Posterior cingulate gyrus (tissue), 11 donors: ENCODE measurements at regions of chr4 and their contacts with region 1.

Region 1: DNA sequence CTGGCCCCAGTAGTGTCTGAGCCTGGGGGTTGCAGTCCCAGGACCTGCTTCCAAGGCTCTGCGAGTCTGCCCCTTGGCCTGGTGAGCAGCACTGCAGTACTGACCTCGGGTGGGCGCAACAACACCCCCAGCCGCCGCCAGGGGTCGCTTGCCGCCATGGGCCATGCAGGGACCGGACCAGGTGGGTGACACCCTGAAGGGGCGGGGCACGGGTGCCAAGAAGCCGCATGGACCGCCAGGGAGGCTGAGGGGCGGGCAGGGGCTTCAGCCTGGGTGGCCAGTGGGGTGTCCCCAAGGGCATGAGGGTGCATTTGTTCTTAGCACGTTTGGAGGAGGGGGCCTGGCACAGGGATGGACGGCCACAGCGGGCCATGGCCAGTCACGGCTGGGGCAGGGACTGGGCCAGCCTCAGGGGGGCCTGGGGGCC is 25.0 kb downstream of the TACC3 start:
- DNase-seq: peak in 9 of 10 donors; percentile 43 to 95 (median 71)

Region 2: DNA sequence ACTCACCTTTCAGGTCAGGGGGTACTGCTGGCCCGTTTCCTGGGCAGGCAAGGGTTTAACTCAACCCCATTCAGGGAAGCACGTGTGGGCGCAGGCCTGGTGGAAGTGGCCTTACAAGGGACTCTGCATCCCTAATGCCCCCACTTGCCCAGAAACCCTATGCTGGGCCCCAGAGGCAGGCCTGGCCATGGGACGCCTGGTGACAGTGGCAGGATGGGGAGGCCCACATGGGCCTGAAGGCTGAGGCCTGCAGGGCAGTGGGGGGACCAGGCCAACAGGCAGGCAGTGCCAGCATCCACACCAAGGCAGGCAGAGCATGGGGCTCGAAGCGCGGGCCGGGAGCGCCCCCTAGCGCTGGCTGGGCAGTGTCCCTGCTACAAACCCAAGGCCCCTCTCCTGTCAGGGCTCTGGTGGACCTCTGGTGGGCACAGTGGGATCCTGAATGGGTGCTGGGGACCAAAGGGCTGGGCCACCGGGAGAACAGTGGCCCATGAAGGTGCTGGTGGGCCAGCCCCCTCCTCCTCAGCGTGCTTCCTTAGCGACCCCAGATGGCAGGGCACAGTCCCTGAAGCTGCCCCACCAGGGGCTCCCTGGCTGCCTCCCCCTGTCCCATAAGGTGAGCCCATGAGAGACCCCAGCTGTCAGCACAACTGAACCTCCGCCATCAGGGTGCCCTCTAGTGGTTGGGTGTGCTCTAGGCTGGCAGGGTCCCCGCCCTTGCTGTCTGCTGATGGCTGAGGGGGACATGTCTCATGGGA is 63.7 kb after region 1 on chr4:
- intact Hi-C with region 1: loop called (anchors 1 kb)
- DNase-seq: peak; percentile 58 to 97 (median 75)

Region 3: GRCh38 chr4:1899149-1900086 is 153.1 kb after region 1 on chr4:
- intact Hi-C with region 1: loop called (anchors 2 kb)
- DNase-seq: peak; percentile 42 to 95 (median 64)

Region 4: DNA sequence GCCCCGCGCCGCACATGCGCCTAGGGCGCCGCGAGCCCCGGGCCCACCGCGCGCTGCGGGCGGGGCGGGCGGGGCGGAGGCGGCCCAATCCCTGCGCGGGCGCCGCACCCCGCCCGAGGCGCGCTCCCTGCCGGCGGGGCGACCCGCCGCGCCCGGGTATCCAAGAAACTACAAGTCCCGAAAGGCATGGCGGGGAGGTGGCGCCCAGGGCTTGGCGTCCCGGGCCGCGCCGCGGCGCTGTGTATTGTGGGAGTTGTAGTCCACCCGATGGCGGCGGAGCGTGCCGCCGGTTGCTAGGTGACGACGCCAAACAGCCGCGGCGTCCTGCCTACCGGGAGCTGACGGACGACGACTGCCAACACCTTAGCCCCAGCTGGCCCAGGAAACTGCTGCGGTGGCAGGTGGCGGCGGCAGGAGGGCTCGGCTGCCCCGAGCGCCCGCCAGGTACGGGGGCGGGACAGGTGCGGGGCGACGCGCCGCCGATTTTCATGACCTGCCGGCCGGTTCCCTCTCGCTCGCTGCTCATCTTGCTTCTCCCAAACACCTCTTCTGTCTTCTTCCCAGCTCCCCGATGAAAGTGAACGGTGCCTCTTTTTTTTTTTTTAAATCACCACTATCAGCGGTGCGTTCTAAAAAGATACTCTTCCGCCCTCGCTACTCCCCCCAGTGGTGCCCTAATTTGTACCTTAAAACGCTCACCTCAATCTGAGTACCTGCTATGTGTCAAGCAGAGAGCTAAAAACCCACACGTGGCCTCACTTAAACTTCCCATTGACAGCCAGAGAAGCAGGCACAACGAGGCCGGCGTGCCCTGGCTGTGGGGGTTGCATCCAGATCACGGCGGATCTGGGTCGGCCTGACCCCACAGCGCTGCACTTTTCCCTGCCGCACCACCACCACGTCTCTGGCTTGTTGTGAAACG is 672.6 kb after region 1 on chr4 and contains the start of gene CFAP99:
- intact Hi-C with region 1: no loop called
- DNase-seq: peak; percentile 94 to 99 (median 98)